RWPE1 (cell line): ENCODE measurements at regions of chr5 and their contacts with region 1.

Region 1: DNA sequence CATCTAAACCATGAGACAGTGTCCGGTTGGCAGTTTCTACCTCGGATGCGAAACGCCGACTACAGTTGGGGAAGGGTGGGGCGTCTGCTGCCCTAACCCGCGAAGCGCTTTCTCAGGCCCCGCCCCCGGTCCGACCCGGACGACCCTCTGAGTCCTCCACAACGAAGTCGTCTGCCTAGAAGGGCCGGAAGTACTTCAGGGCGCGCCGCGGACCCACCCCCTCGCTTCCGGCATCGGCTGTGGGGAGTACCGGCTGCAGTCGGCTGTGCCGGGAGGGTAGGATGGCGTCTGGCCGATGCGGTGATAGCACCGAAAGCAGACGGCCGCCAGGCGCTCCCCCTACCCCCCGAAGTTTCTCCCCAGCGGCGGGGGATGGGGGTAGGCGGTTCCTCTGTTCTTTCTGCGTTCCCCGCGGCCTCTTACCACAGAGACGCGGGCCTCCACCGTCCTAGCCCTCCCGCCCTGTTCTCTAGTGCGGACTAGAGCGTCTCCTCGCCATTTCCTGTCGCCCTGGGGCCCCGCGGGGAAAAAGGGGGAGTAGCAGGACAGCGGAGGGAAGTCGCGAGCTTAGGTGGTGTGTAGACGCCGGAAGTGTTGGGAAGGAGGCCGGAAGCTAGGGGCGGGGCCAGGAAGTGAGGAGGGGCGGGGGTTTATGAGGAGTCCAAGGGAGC is at the start of gene TRIM41:
- DNase-seq: peak; percentile 93
- H3K27ac ChIP-seq: peak within 1 kb of the TSS; percentile 98
- CTCF ChIP-seq: no peak

Region 2: DNA sequence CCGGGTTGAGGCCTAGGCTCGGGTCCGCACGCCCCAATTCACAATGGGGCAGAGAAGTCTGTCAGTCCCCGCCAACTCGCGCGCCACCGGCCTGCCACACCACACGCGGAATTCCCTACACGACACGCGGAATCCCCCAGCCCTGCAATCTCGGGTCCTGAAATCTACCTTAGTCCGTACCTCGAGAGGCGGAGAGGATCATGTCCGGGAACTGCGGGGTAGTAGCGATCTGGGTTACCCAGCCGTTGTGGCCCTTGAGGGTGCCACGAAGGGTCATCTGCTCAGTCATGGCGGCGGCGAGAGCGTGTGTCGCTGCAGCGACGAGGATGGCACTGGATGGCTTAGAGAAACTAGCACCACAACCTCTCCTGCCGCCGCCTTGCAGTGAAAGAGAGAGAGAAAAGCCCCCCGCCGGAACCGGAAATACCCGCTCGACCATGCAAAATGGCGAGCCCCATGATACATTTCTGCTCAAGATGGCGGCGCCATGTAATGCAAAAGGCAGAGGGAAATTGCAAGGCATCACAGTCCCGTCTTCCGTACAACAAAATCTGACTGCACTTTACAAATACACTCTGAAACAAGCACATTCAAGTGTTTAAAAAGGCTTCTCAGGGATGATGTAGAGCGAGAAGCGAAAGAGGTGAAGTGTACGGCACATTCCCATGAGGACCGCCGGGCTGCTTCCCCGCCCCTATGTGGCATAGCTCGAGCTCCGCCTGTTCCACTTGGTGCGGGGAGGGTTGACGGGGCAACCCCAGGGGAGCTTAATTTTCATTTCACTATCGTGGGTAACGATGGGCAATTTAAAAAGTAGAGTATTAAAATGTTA is 20.5 kb after region 1 on chr5 and contains the start of gene RACK1:
- CTCF ChIA-PET with region 1: no interaction called
- POLR2A ChIA-PET with region 1: interaction called, 16 read pairs
- DNase-seq: peak; percentile 90
- H3K27ac ChIP-seq: peak within 1 kb of the TSS; percentile 97
- CTCF ChIP-seq: no peak